ENCODE measurements at regions of chr5 and their contacts with region 1.

Region 1: GRCh38 chr5:146965761-146966659 is 87.5 kb upstream of the PPP2R2B start:
- DNase-seq: peak in 3 of 10 donors; percentile 28 to 64 (median 58)
- H3K4me3 ChIP-seq: peak overlapping the region in 3 of 59 donors; percentile 10 to 26 (median 20)
- H3K27ac ChIP-seq: peak overlapping the region in 29 of 59 donors; percentile 1 to 94 (median 47)
- H3K27me3 ChIP-seq: no peaks in the 10 kb centered on the region
- CTCF ChIP-seq: peak; percentile 85 to 100 (median 95)

Region 2: GRCh38 chr5:146541958-146542849 is 423.8 kb before region 1 on chr5:
- intact Hi-C with region 1: loop called (anchors 1 to 2 kb)
- DNase-seq: peak; percentile 69 to 86 (median 83)
- H3K4me3 ChIP-seq: peak overlapping the region in 2 of 59 donors; percentile 2 to 21
- H3K27ac ChIP-seq: no peak overlapping the region
- H3K27me3 ChIP-seq: no peaks in the 10 kb centered on the region
- CTCF ChIP-seq: peak; percentile 62 to 92 (median 82)

Region 3: GRCh38 chr5:146565764-146566367 is 400.1 kb before region 1 on chr5:
- intact Hi-C with region 1: loop called (anchors 2 to 5 kb)
- DNase-seq: peak in 9 of 10 donors; percentile 26 to 68 (median 56)
- H3K4me3 ChIP-seq: peak overlapping the region in 6 of 59 donors; percentile 8 to 34 (median 25)
- H3K27ac ChIP-seq: no peak overlapping the region
- H3K27me3 ChIP-seq: no peaks in the 10 kb centered on the region
- CTCF ChIP-seq: peak; percentile 40 to 85 (median 72)

Region 4: DNA sequence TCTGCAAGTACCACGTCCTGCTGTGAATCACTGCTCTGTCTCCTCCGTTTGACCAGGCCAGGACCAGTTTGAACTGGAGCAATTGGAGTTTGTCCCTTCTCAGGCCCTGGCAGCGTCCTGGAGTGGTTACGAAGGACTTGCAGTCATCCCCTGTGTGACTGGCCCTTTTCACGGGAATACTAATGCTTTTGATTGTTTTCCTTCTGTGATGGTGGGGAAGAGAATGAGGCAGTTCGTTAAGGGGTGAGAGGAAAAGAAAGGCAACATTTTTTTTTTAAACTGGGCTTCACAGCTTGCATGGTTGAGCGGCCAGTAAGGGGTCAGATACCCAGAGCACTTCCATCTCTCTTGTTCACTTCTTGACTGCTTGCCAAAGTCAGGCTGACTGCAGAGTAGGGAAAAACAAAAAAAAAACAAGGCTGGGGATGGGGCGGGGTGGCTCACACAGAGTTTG is 115.3 kb after region 1 on chr5:
- intact Hi-C with region 1: loop called in 1 of 2 experiments (anchors 5 kb)
- DNase-seq: peak; percentile 7 to 87 (median 74)
- H3K4me3 ChIP-seq: peak overlapping the region; percentile 10 to 76 (median 53)
- H3K27ac ChIP-seq: peak overlapping the region; percentile 22 to 99 (median 95)
- H3K27me3 ChIP-seq: no peaks in the 10 kb centered on the region
- CTCF ChIP-seq: peak in 1 of 56 donors; percentile 17

Region 5: DNA sequence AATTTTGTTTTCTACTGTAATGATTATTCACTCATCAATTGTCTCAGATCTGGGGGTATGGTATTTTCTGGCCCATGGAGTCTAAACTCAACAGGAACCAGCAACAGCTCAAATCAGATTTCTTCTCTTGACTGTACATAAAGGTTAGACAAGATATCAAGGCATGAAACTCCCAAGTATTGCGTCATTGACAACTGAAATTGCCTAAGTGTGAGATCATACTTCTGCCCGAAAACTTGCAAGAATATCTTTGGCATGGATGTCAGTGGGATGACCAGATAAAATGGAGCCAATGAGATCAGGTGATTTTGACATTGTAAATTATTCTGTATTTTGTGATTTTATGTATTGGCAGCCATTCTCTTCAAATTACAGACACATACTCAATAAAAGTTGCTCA is 127.2 kb after region 1 on chr5:
- intact Hi-C with region 1: no loop called
- DNase-seq: no peak
- H3K4me3 ChIP-seq: no peak overlapping the region
- H3K27ac ChIP-seq: peak overlapping the region in 19 of 59 donors; percentile 34 to 92 (median 82)
- H3K27me3 ChIP-seq: no peaks in the 10 kb centered on the region
- CTCF ChIP-seq: no peak

Measured in dorsolateral prefrontal cortex (tissue), 120 donors.